Natural killer cell (primary cell): ENCODE measurements at regions of chr9 and their contacts with region 1.

Region 1: DNA sequence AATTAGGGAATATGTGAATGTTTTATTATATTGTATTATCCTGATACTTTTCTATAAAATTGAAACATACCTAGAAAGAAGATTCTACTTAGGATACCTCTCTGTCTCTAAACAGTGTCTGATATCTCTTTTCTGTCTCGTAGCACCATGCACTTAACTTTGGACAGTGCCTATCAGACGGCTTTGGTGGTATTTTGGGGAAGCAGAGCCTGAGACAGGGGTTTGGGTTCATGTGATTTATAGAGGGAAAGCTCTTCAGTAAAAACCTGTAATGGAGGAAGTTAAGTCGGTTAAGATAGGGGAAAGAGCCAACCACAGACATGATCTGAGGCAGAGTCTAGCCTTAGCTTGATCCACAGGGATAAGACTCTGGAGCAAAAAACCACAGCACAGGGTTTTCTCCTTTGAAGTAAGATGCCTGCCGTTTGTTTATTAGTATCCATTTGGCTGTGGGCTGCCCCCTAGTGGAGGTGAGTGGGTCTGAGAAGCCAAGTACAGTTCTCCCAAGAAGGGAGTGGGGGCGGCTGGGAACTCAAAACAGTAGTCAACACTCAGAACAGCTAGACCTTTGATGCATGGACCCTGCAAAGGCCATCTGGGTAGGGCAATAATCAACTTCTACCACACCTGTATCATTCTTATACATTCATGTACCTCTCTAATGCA is 141.2 kb upstream of the ASTN2 start:
- DNase-seq: peak; percentile 6 to 14
- ATAC-seq: peak in 2 of 3 donors; percentile 37 to 53
- H3K4me3 ChIP-seq: no peak overlapping the region
- H3K4me3 Mint-ChIP-seq: no peak overlapping the region
- H3K27ac ChIP-seq: no peak overlapping the region
- H3K27ac Mint-ChIP-seq: no peak overlapping the region
- H3K4me1 ChIP-seq: no peaks in the 10 kb centered on the region
- H3K4me1 Mint-ChIP-seq: no peaks in the 10 kb centered on the region
- H3K27me3 ChIP-seq: no peaks in the 10 kb centered on the region
- H3K27me3 Mint-ChIP-seq: peaks cover 0 to 4% of the 10 kb centered on the region in 2 donors
- CTCF ChIP-seq: no peak

Region 2: GRCh38 chr9:116737152-116737546 is 818.9 kb before region 1 on chr9:
- intact Hi-C with region 1: loop called (anchors 5 kb)
- DNase-seq: peak; percentile 30 to 46
- ATAC-seq: peak in 1 of 3 donors; percentile 53
- H3K4me3 ChIP-seq: no peak overlapping the region
- H3K4me3 Mint-ChIP-seq: no peak overlapping the region
- H3K27ac ChIP-seq: no peak overlapping the region
- H3K27ac Mint-ChIP-seq: no peak overlapping the region
- H3K4me1 ChIP-seq: no peaks in the 10 kb centered on the region
- H3K4me1 Mint-ChIP-seq: peaks cover 7% of the 10 kb centered on the region in 2 donors
- H3K27me3 ChIP-seq: no peaks in the 10 kb centered on the region
- H3K27me3 Mint-ChIP-seq: peaks cover 3 to 11% of the 10 kb centered on the region in 2 donors
- CTCF ChIP-seq: peak; percentile 63